Caco-2 (cell line): ENCODE measurements at regions of chr18 and their contacts with region 1.

Region 1: GRCh38 chr18:44130376-44130942 is 550.2 kb upstream of the SETBP1 start:
- DNase-seq: peak in 1 of 2 experiments; percentile 14
- H3K4me3 ChIP-seq: no peak overlapping the region
- H3K4me3 Mint-ChIP-seq: no peak overlapping the region
- H3K27ac Mint-ChIP-seq: no peak overlapping the region
- H3K4me1 ChIP-seq: no peaks in the 10 kb centered on the region
- H3K4me1 Mint-ChIP-seq: no peaks in the 10 kb centered on the region
- H3K27me3 ChIP-seq: no peaks in the 10 kb centered on the region
- H3K27me3 Mint-ChIP-seq: peaks cover 2% of the 10 kb centered on the region
- CTCF ChIP-seq: peak; percentile 40 to 47

Region 2: GRCh38 chr18:43620936-43621335 is 509.5 kb before region 1 on chr18:
- CTCF ChIA-PET with region 1: no interaction called
- POLR2A ChIA-PET with region 1: no interaction called
- intact Hi-C with region 1: loop called (anchors 5 kb)
- DNase-seq: peak in 1 of 2 experiments; percentile 7
- H3K4me3 ChIP-seq: no peak overlapping the region
- H3K4me3 Mint-ChIP-seq: no peak overlapping the region
- H3K27ac Mint-ChIP-seq: no peak overlapping the region
- H3K4me1 ChIP-seq: no peaks in the 10 kb centered on the region
- H3K4me1 Mint-ChIP-seq: no peaks in the 10 kb centered on the region
- H3K27me3 ChIP-seq: no peaks in the 10 kb centered on the region
- H3K27me3 Mint-ChIP-seq: no peaks in the 10 kb centered on the region
- CTCF ChIP-seq: peak in 1 of 2 experiments; percentile 3

Region 3: DNA sequence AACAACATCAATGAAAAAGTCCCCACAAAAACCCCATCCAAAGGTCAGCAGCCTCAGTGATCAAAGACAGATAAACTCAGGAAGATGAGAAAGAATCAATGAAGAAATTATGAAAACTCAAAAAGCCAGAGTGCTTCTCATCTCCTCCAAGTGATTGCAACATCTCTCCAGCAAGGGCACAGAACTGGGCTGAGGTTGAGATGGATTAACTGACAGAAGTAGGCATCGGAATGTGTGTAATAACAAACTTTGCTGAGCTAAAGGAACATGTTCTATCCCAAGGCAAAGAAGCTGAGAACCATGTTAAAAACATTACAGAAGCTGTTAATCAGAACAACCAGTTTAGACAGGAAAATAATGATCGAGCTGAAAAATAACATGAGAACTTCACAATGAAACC is 410.4 kb before region 1 on chr18:
- CTCF ChIA-PET with region 1: no interaction called
- POLR2A ChIA-PET with region 1: no interaction called
- intact Hi-C with region 1: no loop called
- DNase-seq: no peak
- H3K4me3 ChIP-seq: no peak overlapping the region
- H3K4me3 Mint-ChIP-seq: no peak overlapping the region
- H3K27ac Mint-ChIP-seq: peak overlapping the region; percentile 55
- H3K4me1 ChIP-seq: no peaks in the 10 kb centered on the region
- H3K4me1 Mint-ChIP-seq: no peaks in the 10 kb centered on the region
- H3K27me3 ChIP-seq: no peaks in the 10 kb centered on the region
- H3K27me3 Mint-ChIP-seq: no peaks in the 10 kb centered on the region
- CTCF ChIP-seq: no peak

Region 4: GRCh38 chr18:43970656-43971055 is 159.8 kb before region 1 on chr18:
- CTCF ChIA-PET with region 1: no interaction called
- POLR2A ChIA-PET with region 1: no interaction called
- intact Hi-C with region 1: no loop called
- DNase-seq: no peak
- H3K4me3 ChIP-seq: no peak overlapping the region
- H3K4me3 Mint-ChIP-seq: no peak overlapping the region
- H3K27ac Mint-ChIP-seq: no peak overlapping the region
- H3K4me1 ChIP-seq: no peaks in the 10 kb centered on the region
- H3K4me1 Mint-ChIP-seq: no peaks in the 10 kb centered on the region
- H3K27me3 ChIP-seq: no peaks in the 10 kb centered on the region
- H3K27me3 Mint-ChIP-seq: no peaks in the 10 kb centered on the region
- CTCF ChIP-seq: no peak

Region 5: DNA sequence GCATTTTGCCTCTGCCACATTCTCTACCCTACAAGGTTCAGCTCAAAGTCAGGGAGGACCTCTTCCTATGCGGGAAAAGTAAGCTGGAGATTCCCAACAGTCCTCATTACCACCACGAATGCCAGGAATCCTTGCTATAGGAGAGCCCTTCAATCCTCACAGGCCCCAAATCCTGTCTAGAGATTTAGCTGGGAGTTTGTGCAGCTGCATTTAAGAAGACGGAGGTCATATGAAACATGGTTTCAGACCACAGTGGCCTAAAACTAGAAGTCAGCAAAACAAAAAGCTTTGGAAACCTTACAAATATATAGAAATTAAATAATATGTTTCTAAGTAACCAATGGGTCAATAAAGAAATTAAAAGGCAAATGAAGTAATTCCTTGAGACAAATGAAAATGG is 135.0 kb after region 1 on chr18:
- CTCF ChIA-PET with region 1: no interaction called
- POLR2A ChIA-PET with region 1: no interaction called
- intact Hi-C with region 1: no loop called
- DNase-seq: no peak
- H3K4me3 ChIP-seq: no peak overlapping the region
- H3K4me3 Mint-ChIP-seq: no peak overlapping the region
- H3K27ac Mint-ChIP-seq: no peak overlapping the region
- H3K4me1 ChIP-seq: no peaks in the 10 kb centered on the region
- H3K4me1 Mint-ChIP-seq: no peaks in the 10 kb centered on the region
- H3K27me3 ChIP-seq: no peaks in the 10 kb centered on the region
- H3K27me3 Mint-ChIP-seq: no peaks in the 10 kb centered on the region
- CTCF ChIP-seq: no peak

Region 6: GRCh38 chr18:44325903-44326635 is 195.6 kb after region 1 on chr18:
- CTCF ChIA-PET with region 1: no interaction called
- POLR2A ChIA-PET with region 1: no interaction called
- intact Hi-C with region 1: loop called (anchors 5 kb)
- DNase-seq: peak; percentile 26 to 35
- H3K4me3 ChIP-seq: no peak overlapping the region
- H3K4me3 Mint-ChIP-seq: no peak overlapping the region
- H3K27ac Mint-ChIP-seq: no peak overlapping the region
- H3K4me1 ChIP-seq: no peaks in the 10 kb centered on the region
- H3K4me1 Mint-ChIP-seq: no peaks in the 10 kb centered on the region
- H3K27me3 ChIP-seq: no peaks in the 10 kb centered on the region
- H3K27me3 Mint-ChIP-seq: peaks cover 3% of the 10 kb centered on the region
- CTCF ChIP-seq: peak in 1 of 2 experiments; percentile 41